ENCODE measurements at regions of chrX and their contacts with region 1.

Region 1: DNA sequence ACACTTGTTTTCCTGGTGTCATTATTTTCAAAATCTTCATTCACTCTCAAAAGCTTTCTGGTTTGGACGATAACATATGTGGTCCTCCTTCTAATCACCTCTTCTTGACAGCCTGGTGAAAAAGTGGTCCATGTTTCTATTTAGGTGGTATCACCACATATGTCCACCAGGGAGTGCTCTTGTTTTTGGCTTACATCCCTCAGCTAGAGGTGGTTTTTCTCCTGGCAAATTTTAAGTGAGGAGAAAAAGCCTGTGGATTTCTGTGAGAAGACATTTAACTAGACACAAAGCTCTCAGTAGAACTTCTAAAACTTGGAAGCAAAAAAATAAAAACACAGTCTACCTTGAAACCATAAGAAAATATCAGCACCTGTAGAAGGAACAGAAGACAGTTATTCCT is 58.0 kb upstream of the FRMPD4 start:
- DNase-seq: no peak
- ATAC-seq: no peak

Region 2: DNA sequence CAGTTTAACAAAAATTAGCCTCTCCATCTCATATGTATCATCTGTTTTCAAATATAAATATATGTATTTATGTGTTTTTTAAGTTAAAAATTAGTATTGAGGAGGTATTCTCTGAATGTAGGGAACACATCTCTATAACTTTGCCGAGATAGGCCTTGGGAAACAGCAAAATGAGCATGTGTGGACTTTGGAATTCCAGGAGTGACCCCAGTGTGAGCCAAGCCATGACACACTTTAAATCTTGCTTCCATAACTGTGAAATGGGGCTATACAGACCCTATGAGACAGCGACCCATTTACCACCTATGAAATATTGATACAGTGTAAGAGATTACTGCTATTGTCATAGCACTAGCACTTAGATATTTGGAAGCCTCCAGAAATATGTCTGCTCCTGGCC is 116.8 kb after region 1 on chrX:
- intact Hi-C with region 1: no loop called
- DNase-seq: no peak
- ATAC-seq: no peak

Region 3: GRCh38 chrX:12245650-12246645 is 165.7 kb after region 1 on chrX:
- intact Hi-C with region 1: no loop called
- DNase-seq: no peak
- ATAC-seq: no peak

Region 4: DNA sequence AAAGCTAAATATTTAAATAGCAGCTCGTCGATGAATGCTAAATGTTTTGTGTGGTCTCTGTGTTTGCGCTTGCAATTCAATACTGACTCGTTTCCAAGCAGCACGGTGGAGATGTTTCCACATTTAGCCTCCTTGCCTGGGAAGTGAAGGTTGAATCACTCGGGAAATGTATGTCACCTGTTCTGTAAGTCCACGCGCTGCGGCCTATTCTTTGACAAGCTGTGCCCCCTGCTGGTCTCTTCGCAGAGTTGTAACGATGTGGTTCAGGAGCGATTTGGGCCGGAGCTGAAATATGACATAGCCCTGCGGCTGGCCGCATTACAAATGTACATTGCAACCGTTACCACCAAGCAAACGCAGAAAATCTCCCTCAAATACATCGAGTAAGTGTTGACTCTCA is 621.4 kb after region 1 on chrX:
- intact Hi-C with region 1: loop called in 1 of 2 experiments (anchors 5 kb)
- DNase-seq: peak; percentile 25
- ATAC-seq: peak in 1 of 2 donors; percentile 52

Measured in left cardiac atrium (tissue), 4 donors.